Activated CD4-positive, alpha-beta T cell treated with anti-CD3 and anti-CD28 coated beads, Interleukin-2, amount 10 ng/mL, durations not matched to agents 24 days and 14 days (primary cell): ENCODE measurements at regions of chr12 and their contacts with region 1.

Region 1: GRCh38 chr12:92551853-92552397 is 150.9 kb upstream of the PLEKHG7 start:
- DNase-seq: peak; percentile 71
- H3K4me3 Mint-ChIP-seq: no peak overlapping the region
- H3K27ac Mint-ChIP-seq: no peak overlapping the region
- H3K4me1 Mint-ChIP-seq: peaks cover 39% of the 10 kb centered on the region
- H3K27me3 Mint-ChIP-seq: no peaks in the 10 kb centered on the region

Region 2: GRCh38 chr12:92136965-92137721 is 414.8 kb before region 1 on chr12:
- intact Hi-C with region 1: loop called (anchors 5 kb)
- DNase-seq: peak; percentile 60
- H3K4me3 Mint-ChIP-seq: peak overlapping the region; percentile 99
- H3K27ac Mint-ChIP-seq: peak overlapping the region; percentile 82
- H3K4me1 Mint-ChIP-seq: peaks cover 66% of the 10 kb centered on the region
- H3K27me3 Mint-ChIP-seq: no peaks in the 10 kb centered on the region

Region 3: DNA sequence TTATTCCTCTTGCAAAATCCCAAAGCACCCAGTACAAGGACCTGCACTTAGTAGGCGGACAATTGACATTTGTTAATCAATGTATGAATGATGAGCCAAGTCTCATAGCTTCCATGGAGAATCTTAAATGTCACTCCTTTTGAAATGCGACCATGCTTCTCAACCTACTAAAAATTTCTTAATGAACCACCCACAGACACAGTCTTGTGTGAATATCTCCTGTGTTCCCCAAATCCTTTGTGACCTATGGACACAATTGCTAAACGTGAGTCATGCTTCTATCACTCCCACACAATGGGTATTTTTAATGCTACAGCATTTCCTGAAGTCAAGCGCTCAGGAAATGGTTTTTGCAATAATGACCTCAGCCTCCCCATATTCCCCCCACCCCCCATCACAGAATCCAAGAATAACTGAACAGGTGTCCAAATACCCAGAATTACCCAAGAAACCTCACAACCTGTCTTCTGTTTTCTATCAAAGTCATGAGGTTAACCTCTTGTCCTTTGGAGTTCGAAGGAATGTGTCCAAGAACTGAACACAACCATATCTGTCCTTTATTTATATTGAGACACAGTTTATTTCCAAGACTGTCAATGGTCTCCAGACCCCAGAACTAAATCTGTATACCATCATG is 12.7 kb before region 1 on chr12:
- intact Hi-C with region 1: loop called (anchors 1 kb)
- DNase-seq: peak; percentile 69
- H3K4me3 Mint-ChIP-seq: peak overlapping the region; percentile 74
- H3K27ac Mint-ChIP-seq: peak overlapping the region; percentile 97
- H3K4me1 Mint-ChIP-seq: peaks cover 64% of the 10 kb centered on the region
- H3K27me3 Mint-ChIP-seq: no peaks in the 10 kb centered on the region

Region 4: GRCh38 chr12:92593734-92594402 is 41.9 kb after region 1 on chr12:
- intact Hi-C with region 1: loop called (anchors 1 kb)
- DNase-seq: peak; percentile 92
- H3K4me3 Mint-ChIP-seq: peak overlapping the region; percentile 71
- H3K27ac Mint-ChIP-seq: peak overlapping the region; percentile 99
- H3K4me1 Mint-ChIP-seq: peaks cover 57% of the 10 kb centered on the region
- H3K27me3 Mint-ChIP-seq: no peaks in the 10 kb centered on the region